ENCODE measurements at regions of chr9 and their contacts with region 1.

Region 1: GRCh38 chr9:69199769-69200470 is 25.8 kb downstream of the TJP2 start:
- DNase-seq: no peak
- H3K4me3 ChIP-seq: no peak overlapping the region
- H3K27ac ChIP-seq: no peak overlapping the region
- H3K4me1 ChIP-seq: no peaks in the 10 kb centered on the region
- H3K27me3 ChIP-seq: no peaks in the 10 kb centered on the region
- CTCF ChIP-seq: no peak

Region 2: DNA sequence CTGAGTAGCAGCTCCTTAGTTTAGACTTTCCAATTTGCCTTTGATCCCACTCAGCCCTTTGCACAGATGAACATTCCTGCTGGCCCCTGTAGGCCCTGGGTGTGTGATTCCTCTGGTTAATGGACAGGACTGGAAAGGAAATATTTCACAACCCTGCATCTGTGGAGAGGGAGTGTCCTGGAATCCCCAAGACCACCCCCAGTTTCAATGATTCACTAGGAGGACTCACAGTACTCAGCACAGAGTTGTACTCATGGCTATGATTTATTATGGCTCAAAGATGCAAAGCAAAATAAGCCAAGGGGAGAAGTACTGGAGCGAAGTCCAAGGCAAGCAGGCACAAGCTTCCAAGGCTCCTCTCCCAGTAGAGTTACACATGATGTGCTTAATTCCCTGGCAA is 68.2 kb before region 1 on chr9:
- intact Hi-C with region 1: loop called (anchors 10 kb)
- DNase-seq: no peak
- H3K4me3 ChIP-seq: no peak overlapping the region
- H3K27ac ChIP-seq: no peak overlapping the region
- H3K4me1 ChIP-seq: peaks cover 3% of the 10 kb centered on the region
- H3K27me3 ChIP-seq: no peaks in the 10 kb centered on the region
- CTCF ChIP-seq: no peak

Region 3: GRCh38 chr9:69532396-69532795 is 332.5 kb after region 1 on chr9:
- intact Hi-C with region 1: no loop called
- DNase-seq: no peak
- H3K4me3 ChIP-seq: no peak overlapping the region
- H3K27ac ChIP-seq: no peak overlapping the region
- H3K4me1 ChIP-seq: no peaks in the 10 kb centered on the region
- H3K27me3 ChIP-seq: no peaks in the 10 kb centered on the region
- CTCF ChIP-seq: no peak

Measured in colonic mucosa (tissue), 4 donors.